ENCODE measurements at regions of chr7 and their contacts with region 1.

Region 1: DNA sequence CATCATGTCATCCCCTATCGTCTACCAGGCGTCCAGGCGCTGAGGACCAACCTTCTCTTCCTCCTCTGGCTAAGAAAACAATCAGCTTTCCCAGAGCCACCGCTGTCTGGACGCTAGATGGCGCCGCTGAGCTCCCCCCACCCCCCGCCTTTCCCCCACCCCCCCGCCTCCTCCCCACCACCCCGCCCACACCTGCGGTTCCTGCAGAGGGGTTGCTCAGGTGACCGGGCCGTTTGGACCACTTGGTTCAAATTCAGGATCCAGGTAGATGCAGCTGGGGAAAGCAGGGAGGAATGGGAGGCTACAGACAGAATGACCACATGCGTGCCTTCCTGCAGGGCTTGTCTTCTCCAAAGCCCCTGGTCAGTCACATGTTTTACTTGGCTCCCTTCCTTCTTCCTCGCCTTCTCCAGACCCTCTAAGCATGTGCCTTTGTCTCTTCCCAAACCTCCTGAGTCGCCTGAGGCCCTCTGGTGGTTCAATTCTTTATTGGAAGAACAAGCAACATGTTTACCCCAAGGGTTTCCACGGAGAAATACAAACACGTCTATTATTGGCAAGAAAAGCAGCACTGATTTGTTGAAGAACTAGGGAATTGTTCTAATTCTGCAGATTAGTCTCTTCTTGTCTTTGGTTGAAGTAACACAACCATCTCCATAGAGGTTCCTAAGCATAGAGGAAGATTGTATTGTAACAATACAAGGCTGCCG is 24.7 kb downstream of the AOC1 start:
- DNase-seq: peak in 4 of 10 donors; percentile 21 to 85 (median 50)

Region 2: DNA sequence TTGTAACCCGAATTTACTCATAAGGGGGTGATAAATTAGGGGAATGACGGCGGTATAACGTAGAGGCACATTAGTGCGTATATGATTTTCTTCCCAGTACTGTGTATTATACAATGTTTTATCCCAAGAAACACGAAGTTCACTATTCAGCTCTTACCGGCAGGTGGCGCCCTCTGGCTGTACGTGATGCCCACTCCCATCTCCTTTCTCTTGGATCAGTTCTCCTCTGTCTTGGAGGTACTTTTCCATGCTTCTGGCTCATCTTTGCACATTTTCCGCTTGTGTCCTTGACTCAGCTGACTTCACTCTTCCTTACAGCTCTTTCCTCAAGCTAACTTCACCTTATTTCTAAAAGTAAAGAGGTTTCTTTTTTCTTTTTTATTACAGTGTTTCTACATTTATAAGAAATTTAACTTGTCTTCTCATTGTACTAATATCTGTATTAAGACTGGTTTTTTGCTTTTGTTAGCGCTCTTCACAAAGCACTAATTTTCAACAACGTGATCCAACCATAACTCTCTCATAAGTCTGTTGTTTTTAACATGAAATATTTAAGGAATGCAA is 98.2 kb before region 1 on chr7:
- intact Hi-C with region 1: loop called (anchors 2 kb)
- DNase-seq: peak; percentile 67 to 97 (median 86)

Measured in posterior cingulate gyrus (tissue), 11 donors.